Mammary epithelial cell (primary cell): ENCODE measurements at regions of chr6 and their contacts with region 1.

Region 1: DNA sequence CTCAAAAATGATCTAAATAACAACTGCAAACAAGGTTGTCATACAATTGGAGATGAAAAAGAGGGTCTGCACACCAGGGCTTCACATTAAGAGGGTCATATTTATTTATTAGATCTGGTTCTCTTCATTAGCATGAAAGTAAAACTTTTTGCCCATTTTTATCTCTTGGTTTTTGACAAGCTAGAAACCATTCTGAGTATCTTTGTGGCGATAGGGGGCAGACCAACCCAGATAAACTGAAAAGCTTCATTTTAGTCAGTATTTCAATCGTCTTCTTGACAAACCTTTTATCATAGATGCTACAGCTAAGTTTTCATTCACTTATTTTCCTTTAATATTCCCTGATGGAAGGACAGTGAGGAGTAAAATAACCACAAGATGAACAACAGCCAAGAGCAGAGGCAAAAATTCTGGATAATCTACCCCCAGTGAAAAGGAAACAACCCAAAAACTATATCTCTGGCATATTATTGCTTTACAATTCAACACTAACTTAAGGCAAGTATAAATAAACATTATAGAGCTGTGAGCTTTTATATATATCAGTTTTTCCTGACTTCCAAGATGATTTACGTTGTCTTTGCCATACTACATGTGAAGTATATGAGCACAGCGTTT is 45.2 kb downstream of the THEMIS start:
- DNase-seq: no peak
- H3K4me3 ChIP-seq: no peak overlapping the region
- H3K27ac ChIP-seq: no peak overlapping the region
- H3K4me1 ChIP-seq: no peaks in the 10 kb centered on the region
- H3K27me3 ChIP-seq: no peaks in the 10 kb centered on the region
- CTCF ChIP-seq: peak; percentile 3 to 44

Region 2: DNA sequence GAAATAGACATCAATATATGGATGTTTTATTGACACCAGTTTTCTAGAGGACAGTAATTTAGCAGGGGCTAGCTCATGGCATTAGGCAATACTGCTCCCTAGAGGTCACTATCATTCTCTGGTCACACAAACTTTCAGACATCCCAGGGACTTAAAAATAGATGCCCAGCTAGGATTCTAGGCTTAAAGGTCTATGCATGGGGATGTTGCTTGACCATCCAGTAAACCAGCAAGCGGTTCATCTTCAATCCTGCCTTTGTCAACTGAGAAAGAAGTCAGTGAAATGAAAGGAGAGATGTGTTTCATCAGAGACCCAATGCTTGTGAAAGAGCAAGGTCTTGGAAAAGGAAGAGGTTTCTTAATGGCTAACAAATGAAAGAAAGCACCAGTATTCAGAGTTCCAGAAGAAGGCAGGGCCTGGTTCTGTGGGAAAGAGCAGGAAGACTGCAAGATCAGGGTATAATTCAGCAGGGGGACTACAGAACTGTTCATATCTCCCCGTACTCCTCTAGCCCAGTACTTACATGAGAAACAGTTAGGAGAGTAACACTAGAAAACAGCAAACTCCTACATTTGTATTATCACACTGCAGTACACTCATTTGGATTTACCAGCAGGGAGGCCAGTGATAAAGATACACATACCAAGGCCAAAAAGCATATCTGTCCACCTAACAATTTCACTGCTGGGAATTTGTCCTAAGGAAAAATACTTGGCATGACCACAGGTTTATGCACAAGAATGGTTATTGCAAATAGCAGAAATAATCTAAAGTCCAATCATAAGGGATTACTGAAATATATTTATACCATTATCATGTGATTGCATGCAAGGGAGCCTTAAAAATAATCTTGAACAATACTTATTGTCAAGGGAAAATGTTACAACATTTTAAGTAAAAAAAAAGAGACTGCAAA is 875.9 kb after region 1 on chr6:
- CTCF ChIA-PET with region 1: no interaction called
- dilution Hi-C with region 1: no loop called
- in situ Hi-C with region 1: no loop called
- intact Hi-C with region 1: loop called (anchors 1 kb)
- DNase-seq: peak; percentile 47
- H3K4me3 ChIP-seq: no peak overlapping the region
- H3K27ac ChIP-seq: no peak overlapping the region
- H3K4me1 ChIP-seq: no peaks in the 10 kb centered on the region
- H3K27me3 ChIP-seq: no peaks in the 10 kb centered on the region
- CTCF ChIP-seq: peak; percentile 66 to 78